Activated CD4-positive, alpha-beta memory T cell treated with anti-CD3 and anti-CD28 coated beads, Interleukin-2, amount 10 ng/mL, durations not matched to agents 7 days and 5 days (primary cell): ENCODE measurements at regions of chr11 and their contacts with region 1.

Region 1: DNA sequence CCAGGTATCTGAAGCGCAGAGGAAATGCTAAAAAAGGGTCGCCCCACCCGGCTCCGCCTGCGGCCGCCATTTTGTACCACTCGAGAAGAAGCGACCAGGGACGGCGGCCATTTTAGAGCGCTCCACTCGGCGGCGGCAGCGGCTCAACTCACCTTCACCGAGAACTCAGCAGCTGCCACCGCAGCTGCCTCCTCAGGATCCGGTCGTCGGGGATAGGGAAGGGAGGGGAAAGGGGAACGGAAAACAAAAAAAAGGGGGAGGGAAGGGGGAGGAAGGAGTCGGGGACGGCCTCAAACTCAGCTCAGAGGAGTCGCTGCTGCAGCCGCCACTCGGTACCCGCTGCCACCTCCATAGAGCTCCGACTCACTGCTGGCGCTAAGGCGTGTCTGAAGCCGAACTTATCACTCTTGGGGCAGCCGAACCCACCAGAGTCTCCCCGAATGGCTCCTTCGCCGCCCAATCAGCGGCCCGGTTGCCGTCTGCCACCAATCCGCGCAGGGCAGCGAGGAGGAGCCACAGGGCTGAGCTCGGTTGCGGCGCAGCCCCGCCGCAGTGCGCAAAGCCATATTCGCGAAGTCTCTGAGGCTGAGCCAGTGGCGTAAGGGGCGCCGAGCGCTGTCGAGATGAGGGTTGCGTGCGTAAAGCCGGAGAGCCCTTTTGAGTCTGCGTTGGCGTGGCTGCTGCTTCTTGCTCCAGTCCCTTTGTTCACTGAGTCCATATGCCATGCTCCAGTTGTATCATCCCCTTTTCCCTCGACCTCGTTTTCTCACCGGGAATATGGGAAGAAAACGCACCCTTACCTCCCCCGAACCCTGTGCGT is at the start of gene EIF4G2:
- DNase-seq: peak; percentile 98
- H3K4me3 Mint-ChIP-seq: peak within 1 kb of the TSS; percentile 94
- H3K27ac Mint-ChIP-seq: peak within 1 kb of the TSS; percentile 98
- H3K4me1 Mint-ChIP-seq: peaks cover 45% of the 10 kb centered on the region
- H3K27me3 Mint-ChIP-seq: peaks cover 2% of the 10 kb centered on the region
- total RNA-seq, gene EIF4G2: 548 to 594 TPM

Region 2: GRCh38 chr11:10455637-10456487 is 352.9 kb before region 1 on chr11:
- CTCF ChIA-PET with region 1: no interaction called
- POLR2A ChIA-PET with region 1: interaction called, 24 read pairs
- DNase-seq: peak; percentile 85
- H3K4me3 Mint-ChIP-seq: peak overlapping the region; percentile 84
- H3K27ac Mint-ChIP-seq: peak overlapping the region; percentile 90
- H3K4me1 Mint-ChIP-seq: peaks cover 78% of the 10 kb centered on the region
- H3K27me3 Mint-ChIP-seq: no peaks in the 10 kb centered on the region

Region 3: GRCh38 chr11:10584071-10584501 is 224.7 kb before region 1 on chr11:
- CTCF ChIA-PET with region 1: no interaction called
- POLR2A ChIA-PET with region 1: no interaction called
- DNase-seq: no peak
- H3K4me3 Mint-ChIP-seq: no peak overlapping the region
- H3K27ac Mint-ChIP-seq: no peak overlapping the region
- H3K4me1 Mint-ChIP-seq: peaks cover 49% of the 10 kb centered on the region
- H3K27me3 Mint-ChIP-seq: peaks cover 12% of the 10 kb centered on the region

Region 4: DNA sequence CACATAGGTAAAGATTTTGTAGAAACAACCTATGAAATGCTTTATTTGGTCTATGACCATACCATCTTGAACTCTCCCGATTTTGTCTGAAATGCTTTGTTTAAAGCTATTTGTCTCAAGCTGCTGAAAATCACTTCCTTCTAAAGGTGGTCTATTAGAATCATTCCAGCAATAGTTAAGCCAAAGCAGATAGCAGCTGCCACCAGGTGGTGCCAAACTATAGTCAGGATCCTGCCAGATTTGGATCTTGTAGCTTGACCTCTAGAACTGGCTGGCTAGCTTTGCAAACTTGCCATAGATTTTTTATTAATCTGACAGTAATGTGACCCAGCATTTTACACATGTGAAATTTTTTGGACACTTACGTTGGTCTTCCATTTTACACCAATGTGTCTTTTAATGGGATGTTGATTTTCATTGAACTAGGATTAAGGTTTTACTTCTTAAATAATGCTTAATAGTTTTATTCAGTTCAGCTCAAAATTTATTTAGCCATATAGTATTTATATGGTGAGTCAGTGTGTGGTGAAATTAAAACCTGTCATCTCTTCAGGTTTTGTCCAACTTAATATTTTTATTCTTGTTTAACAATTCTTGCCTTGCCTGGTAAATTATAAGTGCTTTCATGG is 38.0 kb before region 1 on chr11:
- CTCF ChIA-PET with region 1: interaction called, 11 read pairs
- POLR2A ChIA-PET with region 1: interaction called, 11 read pairs
- DNase-seq: no peak
- H3K4me3 Mint-ChIP-seq: no peak overlapping the region
- H3K27ac Mint-ChIP-seq: no peak overlapping the region
- H3K4me1 Mint-ChIP-seq: no peaks in the 10 kb centered on the region
- H3K27me3 Mint-ChIP-seq: no peaks in the 10 kb centered on the region

Region 5: GRCh38 chr11:10797531-10797930 is 11.2 kb before region 1 on chr11:
- CTCF ChIA-PET with region 1: interaction called, 57 read pairs
- POLR2A ChIA-PET with region 1: interaction called, 111 read pairs
- DNase-seq: no peak
- H3K4me3 Mint-ChIP-seq: no peak overlapping the region
- H3K27ac Mint-ChIP-seq: no peak overlapping the region
- H3K4me1 Mint-ChIP-seq: peaks cover 63% of the 10 kb centered on the region
- H3K27me3 Mint-ChIP-seq: peaks cover 5% of the 10 kb centered on the region

Region 6: DNA sequence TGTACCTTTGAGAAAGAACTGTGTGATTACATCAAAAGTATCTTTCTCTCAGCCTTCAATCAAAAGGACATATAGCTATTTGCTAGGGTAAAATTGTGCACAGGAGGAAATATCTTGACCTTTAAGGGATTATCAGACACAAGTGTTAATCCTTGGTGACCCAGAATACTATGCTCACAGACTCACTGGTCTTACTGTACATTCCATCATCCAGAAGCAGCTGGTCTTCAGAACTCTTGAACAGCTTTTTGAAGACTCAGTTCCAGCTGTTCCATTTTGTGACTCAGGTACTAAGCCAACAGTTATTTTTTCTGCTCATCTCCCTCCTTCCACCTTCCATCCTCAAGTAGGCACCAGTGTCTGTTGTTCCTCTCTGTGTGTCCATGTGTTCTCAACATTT is 29.3 kb after region 1 on chr11:
- CTCF ChIA-PET with region 1: no interaction called
- POLR2A ChIA-PET with region 1: interaction called, 24 read pairs
- DNase-seq: no peak
- H3K4me3 Mint-ChIP-seq: no peak overlapping the region
- H3K27ac Mint-ChIP-seq: no peak overlapping the region
- H3K4me1 Mint-ChIP-seq: no peaks in the 10 kb centered on the region
- H3K27me3 Mint-ChIP-seq: no peaks in the 10 kb centered on the region

Region 7: GRCh38 chr11:10857709-10858438 is 49.1 kb after region 1 on chr11 and contains the start of gene ZBED5:
- CTCF ChIA-PET with region 1: interaction called, 28 read pairs
- POLR2A ChIA-PET with region 1: interaction called, 379 read pairs
- DNase-seq: peak; percentile 98
- H3K4me3 Mint-ChIP-seq: peak within 1 kb of the TSS; percentile 100
- H3K27ac Mint-ChIP-seq: peak within 1 kb of the TSS; percentile 100
- H3K4me1 Mint-ChIP-seq: peaks cover 45% of the 10 kb centered on the region
- H3K27me3 Mint-ChIP-seq: no peaks in the 10 kb centered on the region
- total RNA-seq, gene ZBED5: 44.2 to 45.6 TPM